ENCODE measurements at regions of chr5 and their contacts with region 1.

Region 1: GRCh38 chr5:132820162-132820754 is 7.2 kb downstream of the SOWAHA start:
- DNase-seq: peak; percentile 81
- H3K4me3 Mint-ChIP-seq: no peak overlapping the region
- H3K27ac Mint-ChIP-seq: no peak overlapping the region
- H3K4me1 Mint-ChIP-seq: peaks cover 15% of the 10 kb centered on the region
- H3K27me3 Mint-ChIP-seq: peaks cover 59% of the 10 kb centered on the region

Region 2: DNA sequence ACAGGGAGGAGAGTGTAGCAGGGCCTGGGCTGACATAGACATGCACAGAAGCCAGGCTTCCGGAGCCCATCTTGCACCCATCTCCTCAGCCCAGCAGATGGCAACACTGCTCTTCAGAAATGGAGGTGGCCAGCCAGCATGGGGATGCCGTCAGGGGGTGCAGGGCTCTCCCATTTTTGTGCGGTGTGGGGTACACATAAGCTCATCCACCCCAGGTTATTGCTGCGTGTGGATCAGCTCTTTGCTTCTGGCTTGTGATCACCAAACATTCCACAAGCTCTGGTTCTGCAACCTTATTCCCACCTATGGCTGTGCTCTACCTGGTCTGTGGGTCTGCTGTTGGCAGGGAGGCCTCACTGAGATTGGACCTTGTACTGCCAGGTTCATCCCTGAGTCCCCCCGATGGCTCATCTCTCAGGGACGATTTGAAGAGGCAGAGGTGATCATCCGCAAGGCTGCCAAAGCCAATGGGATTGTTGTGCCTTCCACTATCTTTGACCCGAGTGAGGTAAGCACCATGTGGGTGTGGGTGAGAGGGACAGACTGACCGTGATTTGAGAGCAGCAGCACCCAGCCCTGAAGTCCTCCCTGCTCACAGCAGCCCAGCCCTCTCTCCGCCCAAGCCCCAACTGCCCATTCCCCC is 433.5 kb before region 1 on chr5:
- intact Hi-C with region 1: loop called (anchors 5 kb)
- DNase-seq: peak; percentile 73
- H3K4me3 Mint-ChIP-seq: no peak overlapping the region
- H3K27ac Mint-ChIP-seq: peak overlapping the region; percentile 24
- H3K4me1 Mint-ChIP-seq: peaks cover 42% of the 10 kb centered on the region
- H3K27me3 Mint-ChIP-seq: no peaks in the 10 kb centered on the region

Region 3: DNA sequence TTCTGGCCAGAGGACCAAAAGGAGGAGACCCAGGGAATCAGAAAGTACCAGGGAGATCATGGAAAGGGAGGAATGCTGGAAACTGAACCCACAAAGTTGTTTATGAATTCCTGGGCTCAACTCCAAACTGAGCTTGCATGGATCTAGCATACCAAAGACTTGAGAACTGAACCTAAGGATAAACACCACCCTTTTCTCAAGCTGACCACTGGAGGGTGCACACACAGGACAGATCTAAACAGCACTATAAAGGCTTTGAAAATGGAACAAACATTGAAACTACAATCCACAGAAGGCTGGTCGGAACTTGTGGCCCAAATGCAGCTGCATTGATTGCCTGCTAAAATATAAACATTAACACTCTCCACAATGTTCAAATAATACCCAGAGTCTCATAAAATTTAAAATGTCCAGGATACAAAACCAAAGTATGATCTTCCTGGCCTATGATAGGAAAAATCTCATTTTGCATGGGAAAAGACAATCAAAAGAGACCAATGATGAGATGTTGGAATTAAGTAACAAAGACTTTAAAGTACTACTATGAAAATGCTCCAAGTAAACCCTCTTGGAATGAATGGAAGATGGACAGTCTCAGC is 314.1 kb before region 1 on chr5:
- intact Hi-C with region 1: loop called (anchors 5 kb)
- DNase-seq: no peak
- H3K4me3 Mint-ChIP-seq: no peak overlapping the region
- H3K27ac Mint-ChIP-seq: no peak overlapping the region
- H3K4me1 Mint-ChIP-seq: peaks cover 19% of the 10 kb centered on the region
- H3K27me3 Mint-ChIP-seq: peaks cover 14% of the 10 kb centered on the region

Region 4: DNA sequence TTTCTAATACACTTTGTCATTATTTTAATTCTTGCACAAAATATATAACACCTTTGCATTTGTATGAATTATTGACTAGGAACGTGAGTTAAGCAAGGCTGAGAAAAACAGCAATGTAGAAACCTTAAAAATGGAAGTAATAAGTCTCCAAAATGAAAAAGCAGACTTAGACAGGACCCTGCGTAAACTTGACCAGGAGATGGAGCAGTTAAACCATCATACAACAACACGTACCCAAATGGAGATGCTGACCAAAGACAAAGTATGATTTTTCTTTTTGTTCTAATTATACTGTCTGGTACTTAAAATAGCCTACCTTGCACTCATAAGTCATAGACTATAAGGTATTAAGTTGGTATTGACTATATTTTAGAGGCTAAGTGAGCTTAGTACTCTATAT is 229.1 kb before region 1 on chr5:
- intact Hi-C with region 1: loop called (anchors 2 kb)
- DNase-seq: no peak
- H3K4me3 Mint-ChIP-seq: no peak overlapping the region
- H3K27ac Mint-ChIP-seq: no peak overlapping the region
- H3K4me1 Mint-ChIP-seq: peaks cover 21% of the 10 kb centered on the region
- H3K27me3 Mint-ChIP-seq: no peaks in the 10 kb centered on the region

Region 5: DNA sequence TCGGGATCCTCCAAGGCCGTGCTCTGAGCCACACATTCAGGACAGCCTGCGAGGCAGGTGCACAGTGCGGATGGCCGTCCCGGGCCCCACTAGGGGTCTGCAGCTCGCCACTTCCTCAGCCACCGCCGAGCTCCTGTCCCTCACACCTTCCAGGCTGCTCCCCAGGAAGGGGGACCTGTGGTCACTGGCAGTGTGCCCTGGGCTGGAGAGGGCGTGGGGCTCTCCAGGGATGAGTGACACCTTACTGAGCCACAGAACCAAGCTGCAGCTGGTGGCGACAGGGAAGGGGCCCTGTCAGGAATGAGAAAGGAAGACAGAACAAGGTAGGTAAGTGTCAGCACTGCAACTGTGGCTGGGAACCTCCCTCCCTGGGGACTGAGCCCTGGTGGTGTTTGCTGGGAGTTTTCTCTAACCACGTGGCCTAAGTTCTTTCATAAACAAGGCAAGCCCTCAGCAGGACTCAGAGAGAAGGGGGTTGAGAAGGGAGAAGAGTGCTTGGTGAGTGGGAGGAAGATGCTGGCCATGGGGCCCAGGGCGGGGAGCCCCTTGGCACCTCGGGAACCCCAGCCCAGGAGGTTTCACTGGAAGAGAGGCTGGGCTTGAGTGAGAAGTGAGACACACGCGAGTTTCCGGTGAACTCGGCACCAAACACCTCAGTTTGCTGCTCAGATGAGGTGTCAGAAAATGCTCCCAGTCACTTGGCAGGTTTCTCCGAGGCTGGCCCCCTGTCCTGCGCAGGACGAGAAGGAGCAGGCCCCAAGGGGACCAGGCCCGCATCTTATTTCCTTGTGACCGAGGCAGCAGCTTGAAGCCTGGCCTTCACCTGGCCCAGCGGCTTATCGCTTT is 157.1 kb before region 1 on chr5:
- intact Hi-C with region 1: loop called (anchors 5 kb)
- DNase-seq: no peak
- H3K4me3 Mint-ChIP-seq: no peak overlapping the region
- H3K27ac Mint-ChIP-seq: peak overlapping the region; percentile 92
- H3K4me1 Mint-ChIP-seq: peaks cover 74% of the 10 kb centered on the region
- H3K27me3 Mint-ChIP-seq: no peaks in the 10 kb centered on the region

Region 6: DNA sequence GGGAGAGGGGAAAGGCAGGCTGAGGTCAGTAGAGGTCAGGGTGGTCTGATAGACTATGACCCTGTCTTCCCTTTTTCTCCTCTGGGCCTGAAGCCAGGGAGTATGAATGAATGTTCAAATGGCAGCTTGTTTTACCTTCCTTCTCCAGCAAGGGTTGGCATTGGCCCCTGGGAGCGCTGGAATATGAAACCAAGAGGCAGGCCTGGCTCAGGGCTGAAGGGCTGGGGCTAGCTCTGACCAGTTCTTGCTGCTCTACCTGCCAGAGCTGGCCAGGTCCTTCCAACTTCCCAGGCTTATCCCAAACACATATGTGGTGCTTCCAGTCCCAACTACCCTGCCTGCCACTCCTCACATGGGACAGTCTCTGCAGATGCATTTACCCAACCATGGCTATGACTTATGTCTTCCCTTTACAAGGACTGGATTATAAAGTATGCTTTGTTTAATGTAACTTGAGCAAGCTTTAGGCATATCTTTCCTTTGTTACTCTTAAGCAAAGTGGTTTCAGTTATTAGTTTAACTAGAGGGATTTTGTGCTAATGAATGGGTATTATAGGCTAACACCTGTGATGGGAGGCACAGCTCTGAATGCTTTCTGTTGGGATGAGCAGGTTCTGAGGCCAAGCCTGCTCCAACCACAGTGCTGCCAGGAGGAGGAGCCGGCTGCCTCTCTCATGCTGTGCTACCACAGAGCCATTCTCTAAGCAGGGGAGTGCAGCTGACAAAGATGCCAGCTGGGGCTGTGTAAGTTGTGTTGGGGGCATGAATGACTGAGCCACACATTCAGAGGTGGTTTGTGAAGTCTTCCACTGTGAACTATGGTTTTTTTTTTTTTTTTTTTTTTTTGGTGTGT is 66.9 kb before region 1 on chr5:
- intact Hi-C with region 1: loop called (anchors 2 kb)
- DNase-seq: no peak
- H3K4me3 Mint-ChIP-seq: no peak overlapping the region
- H3K27ac Mint-ChIP-seq: peak overlapping the region; percentile 5
- H3K4me1 Mint-ChIP-seq: peaks cover 42% of the 10 kb centered on the region
- H3K27me3 Mint-ChIP-seq: peaks cover 4% of the 10 kb centered on the region